ENCODE measurements at regions of chr4 and their contacts with region 1.

Region 1: GRCh38 chr4:119559044-119559647 is 69.5 kb downstream of the PDE5A start:
- DNase-seq: no peak
- ATAC-seq: no peak
- H3K4me3 ChIP-seq: no peak overlapping the region
- H3K27ac ChIP-seq: peak overlapping the region in 1 of 12 donors; percentile 6
- H3K4me1 ChIP-seq: no peaks in the 10 kb centered on the region
- H3K27me3 ChIP-seq: no peaks in the 10 kb centered on the region
- CTCF ChIP-seq: peak; percentile 16 to 66 (median 51)
- POLR2A ChIP-seq: no peak

Region 2: GRCh38 chr4:118981839-118982381 is 577.2 kb before region 1 on chr4:
- intact Hi-C with region 1: no loop called
- DNase-seq: peak in 4 of 5 donors; percentile 59 to 74 (median 67)
- ATAC-seq: peak; percentile 69 to 81 (median 77)
- H3K4me3 ChIP-seq: peak overlapping the region in 1 of 12 donors; percentile 6
- H3K27ac ChIP-seq: peak overlapping the region in 9 of 12 donors; percentile 18 to 87 (median 59)
- H3K4me1 ChIP-seq: peaks cover 3 to 86% (median 48%) of the 10 kb centered on the region in 12 donors
- H3K27me3 ChIP-seq: no peaks in the 10 kb centered on the region
- CTCF ChIP-seq: peak; percentile 58 to 83 (median 74)
- POLR2A ChIP-seq: no peak

Region 3: GRCh38 chr4:119628308-119629141 is 69.4 kb after region 1 on chr4 and contains the start of gene PDE5A:
- intact Hi-C with region 1: loop called in 9 of 10 experiments (anchors 2 to 10 kb)
- DNase-seq: peak; percentile 76 to 90 (median 81)
- ATAC-seq: peak; percentile 78 to 94 (median 87)
- H3K4me3 ChIP-seq: peak within 1 kb of the TSS; percentile 51 to 87 (median 80)
- H3K27ac ChIP-seq: peak within 1 kb of the TSS; percentile 76 to 95 (median 87)
- H3K4me1 ChIP-seq: peaks cover 0 to 19% (median 3%) of the 10 kb centered on the region in 12 donors
- H3K27me3 ChIP-seq: peaks cover 0 to 35% (median 0%) of the 10 kb centered on the region in 9 donors
- CTCF ChIP-seq: peak; percentile 53 to 88 (median 78)
- POLR2A ChIP-seq: no peak
- total RNA-seq, gene PDE5A: 3.8 to 20.6 (median 10.0) TPM

Region 4: DNA sequence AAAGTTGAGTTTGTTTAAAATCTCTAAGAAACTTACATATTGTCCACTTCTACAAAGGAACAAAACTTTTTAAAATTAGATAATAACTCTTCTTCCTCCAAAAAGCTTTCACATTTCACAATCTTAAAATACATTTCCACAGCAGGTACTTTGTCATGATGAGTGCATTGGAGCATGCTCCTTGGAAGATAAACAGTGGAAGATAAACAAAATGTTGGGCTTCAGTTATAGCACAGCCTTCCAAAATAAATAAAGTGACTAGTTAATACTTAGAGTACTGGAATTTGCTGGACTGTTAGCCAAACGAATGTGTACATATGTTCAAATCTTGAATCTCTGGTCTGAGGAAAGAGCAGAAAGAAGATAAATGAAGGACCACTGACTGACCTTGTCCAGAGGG is 124.4 kb after region 1 on chr4:
- intact Hi-C with region 1: no loop called
- DNase-seq: no peak
- ATAC-seq: peak; percentile 37 to 83 (median 70)
- H3K4me3 ChIP-seq: no peak overlapping the region
- H3K27ac ChIP-seq: peak overlapping the region in 5 of 12 donors; percentile 20 to 60 (median 40)
- H3K4me1 ChIP-seq: peaks cover 0 to 14% (median 0%) of the 10 kb centered on the region in 12 donors
- H3K27me3 ChIP-seq: no peaks in the 10 kb centered on the region
- CTCF ChIP-seq: no peak
- POLR2A ChIP-seq: no peak

Measured in heart left ventricle (tissue), 16 donors.